ENCODE measurements at regions of chr2 and their contacts with region 1.

Region 1: DNA sequence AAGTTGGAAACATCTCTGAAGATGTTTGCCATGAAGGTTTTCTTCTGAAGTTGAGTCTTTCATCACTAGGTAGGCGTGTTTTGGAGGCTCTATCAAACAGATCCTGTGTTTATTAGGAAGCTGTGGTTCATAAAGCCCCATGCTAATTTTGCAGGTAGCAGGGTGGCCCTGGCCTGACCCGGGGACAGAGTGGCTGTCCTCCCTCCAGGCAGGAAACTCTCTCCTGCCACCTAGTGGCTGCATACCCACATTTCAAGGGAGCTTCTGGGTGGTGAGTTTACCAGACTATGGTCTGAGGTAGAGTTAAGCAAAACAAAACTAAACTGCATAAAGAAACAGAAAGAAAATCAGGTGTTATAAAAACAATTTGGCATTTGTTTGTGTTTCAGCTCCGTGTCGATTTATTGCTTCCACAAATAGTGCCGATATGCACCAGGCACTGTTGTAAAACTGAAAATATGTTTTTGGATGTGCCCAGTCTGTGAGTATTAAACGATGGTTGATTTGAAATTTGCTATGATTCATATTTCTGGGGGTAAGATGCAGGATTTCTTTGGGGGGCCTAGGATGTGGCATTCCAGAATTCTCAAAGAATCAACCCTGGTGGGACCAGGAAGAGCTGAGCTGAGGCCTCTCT is 26.0 kb upstream of the IL37 start:
- DNase-seq: peak in 2 of 10 donors; percentile 41 to 56
- H3K4me3 ChIP-seq: no peak overlapping the region
- H3K27ac ChIP-seq: no peak overlapping the region
- H3K27me3 ChIP-seq: no peaks in the 10 kb centered on the region
- CTCF ChIP-seq: peak; percentile 33 to 78 (median 67)

Region 2: GRCh38 chr2:112749755-112750559 is 135.0 kb before region 1 on chr2:
- intact Hi-C with region 1: loop called in 1 of 2 experiments (anchors 2 kb)
- DNase-seq: peak; percentile 58 to 84 (median 68)
- H3K4me3 ChIP-seq: peak overlapping the region in 3 of 59 donors; percentile 2 to 21 (median 8)
- H3K27ac ChIP-seq: peak overlapping the region in 31 of 59 donors; percentile 1 to 72 (median 38)
- H3K27me3 ChIP-seq: no peaks in the 10 kb centered on the region
- CTCF ChIP-seq: peak; percentile 73 to 98 (median 93)

Region 3: GRCh38 chr2:112764071-112765044 is 120.6 kb before region 1 on chr2 and contains the start of gene CKAP2L:
- intact Hi-C with region 1: loop called in 1 of 2 experiments (anchors 5 kb)
- DNase-seq: peak; percentile 90 to 98 (median 97)
- H3K4me3 ChIP-seq: peak within 1 kb of the TSS; percentile 62 to 99 (median 82)
- H3K27ac ChIP-seq: peak within 1 kb of the TSS in 24 of 59 donors; percentile 2 to 84 (median 35)
- H3K27me3 ChIP-seq: no peaks in the 10 kb centered on the region
- CTCF ChIP-seq: peak in 33 of 56 donors; percentile 9 to 63 (median 30)
- total RNA-seq, gene CKAP2L: 0.09 to 1.7 (median 0.47) TPM in 93 of 120 experiments, not detected in the others

Region 4: DNA sequence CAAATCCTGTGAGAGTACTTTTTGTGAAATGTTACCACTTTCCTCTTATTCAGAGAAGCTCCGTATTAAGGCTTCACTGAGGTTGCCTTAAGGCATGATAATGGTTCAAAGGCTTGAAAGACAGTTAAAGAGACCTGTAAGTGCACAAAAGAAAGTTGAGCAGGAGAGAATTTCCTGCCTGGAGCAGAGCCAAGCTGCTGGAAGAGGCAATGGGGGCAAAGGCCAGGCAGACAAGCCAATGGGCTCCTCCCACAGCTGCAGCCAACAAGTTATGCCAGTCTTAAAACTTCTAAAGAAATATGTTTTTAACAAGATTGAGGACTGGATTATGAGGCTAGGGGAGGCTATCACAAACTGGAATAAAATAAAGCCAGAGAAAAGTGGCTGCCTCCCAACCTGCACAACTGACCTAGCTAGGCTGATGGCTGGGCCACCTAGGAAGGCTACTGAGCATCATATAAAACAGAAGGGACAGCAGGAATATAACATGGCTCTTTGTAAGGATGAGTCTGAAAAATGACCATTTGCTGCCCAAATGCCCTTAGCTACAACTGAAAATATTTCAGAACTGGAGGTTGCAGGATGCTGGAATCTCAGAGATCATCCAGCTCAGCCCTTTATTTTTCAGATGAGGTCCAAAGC is 50.5 kb before region 1 on chr2:
- intact Hi-C with region 1: no loop called
- DNase-seq: no peak
- H3K4me3 ChIP-seq: peak overlapping the region in 14 of 59 donors; percentile 3 to 53 (median 24)
- H3K27ac ChIP-seq: no peak overlapping the region
- H3K27me3 ChIP-seq: no peaks in the 10 kb centered on the region
- CTCF ChIP-seq: no peak

Region 5: DNA sequence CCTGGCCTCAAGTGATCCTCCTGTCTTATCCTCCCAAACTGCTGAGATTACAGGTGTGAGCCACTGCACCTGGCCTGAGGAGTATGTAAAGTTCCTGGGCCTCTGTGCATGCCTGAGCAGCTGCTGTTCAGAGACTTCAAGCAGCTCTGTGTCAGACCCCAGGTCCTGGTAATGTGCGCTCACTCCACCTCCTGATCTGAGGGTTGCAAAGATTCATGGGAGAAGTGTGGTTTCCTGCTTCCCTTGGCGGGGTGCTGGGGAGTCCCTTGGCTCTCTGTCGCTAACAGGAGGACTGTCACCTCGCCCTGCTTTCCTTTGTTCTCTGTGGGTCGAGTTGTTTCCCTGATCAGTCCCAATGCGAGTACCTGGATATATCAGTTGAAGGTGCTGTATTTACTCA is 111.6 kb after region 1 on chr2:
- intact Hi-C with region 1: no loop called
- DNase-seq: no peak
- H3K4me3 ChIP-seq: no peak overlapping the region
- H3K27ac ChIP-seq: no peak overlapping the region
- H3K27me3 ChIP-seq: peaks cover 0 to 4% (median 0%) of the 10 kb centered on the region in 45 donors
- CTCF ChIP-seq: no peak

Region 6: GRCh38 chr2:113050921-113051895 is 166.2 kb after region 1 on chr2:
- intact Hi-C with region 1: no loop called
- DNase-seq: no peak
- H3K4me3 ChIP-seq: no peak overlapping the region
- H3K27ac ChIP-seq: no peak overlapping the region
- H3K27me3 ChIP-seq: peaks cover 0 to 7% (median 0%) of the 10 kb centered on the region in 45 donors
- CTCF ChIP-seq: no peak

Measured in dorsolateral prefrontal cortex (tissue), 120 donors.